Posterior vena cava (tissue), 2 donors: ENCODE measurements at regions of chr2 and their contacts with region 1.

Region 1: DNA sequence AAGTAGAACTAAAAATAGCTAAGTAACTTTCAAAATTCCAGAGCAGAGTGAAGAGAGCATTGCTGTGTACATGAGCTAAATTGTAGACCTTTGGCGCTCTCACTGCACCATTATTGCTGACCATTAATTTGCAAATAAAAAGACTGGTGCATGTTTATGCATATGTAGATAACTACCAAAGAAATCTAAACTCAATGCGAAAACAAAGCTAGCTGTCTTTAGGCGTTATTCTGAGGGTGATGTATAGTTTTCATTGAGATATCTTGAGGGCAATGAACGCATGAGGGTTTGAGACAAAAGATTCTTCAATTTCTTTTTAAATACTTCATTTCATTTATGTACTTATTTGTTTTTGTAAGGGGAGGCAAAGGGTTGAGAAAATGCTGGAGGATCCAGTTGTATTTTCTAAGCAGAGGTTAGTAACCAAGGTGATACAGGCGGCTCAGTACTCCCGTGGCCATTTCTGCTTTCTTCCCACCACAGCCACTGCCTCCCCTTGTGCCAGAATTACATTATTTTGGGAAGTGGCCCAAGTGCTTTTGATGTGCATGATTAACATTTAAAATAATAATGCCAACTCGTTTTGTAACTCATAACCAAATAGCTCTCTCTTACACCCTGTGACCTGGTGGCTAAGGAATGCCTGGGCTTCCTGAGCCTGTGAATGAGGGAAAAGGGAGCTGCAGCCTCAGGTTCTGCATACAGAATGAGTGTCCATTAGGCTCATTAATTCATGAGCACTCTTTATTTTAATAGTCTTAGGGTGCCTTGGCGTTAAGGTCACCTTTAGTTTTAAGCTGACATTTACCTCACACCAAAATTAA is 797.8 kb upstream of the GYPC start:
- DNase-seq: no peak

Region 2: DNA sequence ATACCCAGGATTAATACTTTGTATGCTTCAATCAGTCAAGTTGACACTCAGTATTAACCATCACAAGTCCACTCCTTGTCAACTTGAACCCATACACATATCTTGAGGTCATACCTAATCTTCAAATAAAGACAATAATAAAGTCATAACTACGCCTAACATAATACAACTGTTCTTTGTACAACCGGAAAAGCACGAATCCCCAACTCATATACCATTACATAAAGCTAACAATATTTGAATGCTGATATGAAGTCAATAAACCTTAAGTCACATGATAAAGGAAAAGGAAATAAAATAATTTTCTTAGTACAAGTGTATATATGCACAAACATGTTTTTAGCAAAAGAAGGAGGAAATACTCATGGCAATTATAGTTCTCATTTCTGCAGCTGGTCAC is 27.2 kb after region 1 on chr2:
- intact Hi-C with region 1: no loop called
- DNase-seq: no peak

Region 3: GRCh38 chr2:125901278-125901677 is 43.1 kb after region 1 on chr2:
- intact Hi-C with region 1: loop called in 1 of 2 experiments (anchors 2 kb)
- DNase-seq: no peak

Region 4: DNA sequence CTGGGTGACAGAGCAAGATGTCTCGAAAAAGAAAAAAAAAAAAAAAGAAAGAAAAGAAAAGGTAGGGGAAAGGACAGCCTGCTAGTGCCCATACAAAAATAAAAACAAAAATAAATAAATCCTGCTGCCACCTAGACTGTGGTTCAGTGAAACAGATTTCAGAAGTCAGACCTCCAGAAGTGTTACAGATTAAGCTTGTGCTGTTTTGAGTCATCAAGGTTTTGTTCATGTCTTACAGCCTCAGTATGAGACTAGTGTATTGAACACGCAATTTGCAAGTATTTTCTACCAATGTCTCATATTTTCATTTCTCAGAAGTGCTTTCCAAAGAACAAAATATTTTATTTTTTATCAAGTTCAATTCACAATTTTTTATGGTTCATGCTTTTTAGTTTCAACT is 77.4 kb after region 1 on chr2:
- intact Hi-C with region 1: no loop called
- DNase-seq: no peak